Activated CD4-positive, alpha-beta memory T cell treated with anti-CD3 and anti-CD28 coated beads for 36 hours (primary cell): ENCODE measurements at regions of chr12 and their contacts with region 1.

Region 1: DNA sequence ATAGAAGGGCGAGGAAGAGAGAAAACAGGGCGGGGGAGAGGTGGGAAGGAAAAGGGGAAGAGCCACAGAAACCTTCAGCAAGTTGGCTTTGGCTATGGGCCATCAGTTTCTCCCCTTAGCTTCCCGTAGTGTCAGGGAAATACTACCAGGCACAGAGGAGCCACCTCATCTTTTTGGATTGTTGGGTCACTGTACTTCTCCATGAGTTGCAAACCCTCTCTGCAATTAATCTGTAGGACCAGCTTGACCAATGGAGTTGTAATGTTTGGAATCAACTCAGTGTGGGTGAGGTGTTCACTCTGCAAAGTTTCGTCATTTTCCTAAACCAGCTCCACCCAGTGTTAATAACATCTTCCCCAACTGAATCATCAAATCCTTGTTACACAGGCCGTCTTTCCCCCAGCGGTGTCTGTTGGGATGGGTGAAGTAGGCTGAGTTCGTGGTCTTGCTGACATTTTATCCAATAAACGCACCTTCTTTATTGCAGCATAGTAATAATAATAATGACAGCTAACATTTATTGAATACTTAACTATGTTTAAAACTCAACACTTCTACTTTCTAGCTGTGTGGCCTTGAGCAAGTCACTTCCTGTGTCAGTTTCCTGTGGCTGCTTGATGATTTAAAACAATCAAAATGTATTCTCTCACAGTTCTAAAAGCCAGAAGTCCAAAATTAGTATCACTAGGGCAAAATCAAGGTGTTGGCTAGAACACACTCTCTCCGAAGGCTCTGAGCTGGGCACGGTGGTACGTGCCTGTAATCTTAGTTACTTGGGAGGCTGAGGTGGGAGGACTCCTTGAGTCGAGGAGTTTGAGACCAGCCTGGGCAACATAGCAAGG is 8.1 kb upstream of the GLTP start:
- DNase-seq: peak; percentile 66
- H3K4me3 Mint-ChIP-seq: peak overlapping the region; percentile 27
- H3K27ac Mint-ChIP-seq: peak overlapping the region; percentile 94
- H3K4me1 Mint-ChIP-seq: peaks cover 38% of the 10 kb centered on the region
- H3K27me3 Mint-ChIP-seq: no peaks in the 10 kb centered on the region

Region 2: DNA sequence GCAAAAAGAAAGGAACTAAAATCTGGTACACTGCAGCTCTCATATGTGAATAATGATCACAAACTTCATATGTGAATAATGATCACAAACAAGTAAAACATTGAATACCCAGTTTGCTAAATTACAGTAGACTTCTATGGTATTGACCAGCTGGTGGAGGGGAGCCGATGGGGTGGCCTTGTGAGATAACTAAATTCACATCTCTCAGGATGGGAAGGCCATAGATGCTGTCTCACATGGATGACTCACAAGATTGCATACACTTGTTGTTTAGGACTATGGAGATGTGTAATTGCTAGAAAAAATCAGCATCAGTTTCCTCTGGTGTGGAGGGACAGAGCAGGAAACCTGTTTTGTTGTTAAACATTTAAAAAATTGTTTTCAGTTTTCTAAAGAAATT is 722.8 kb before region 1 on chr12:
- CTCF ChIA-PET with region 1: no interaction called
- POLR2A ChIA-PET with region 1: no interaction called
- intact Hi-C with region 1: no loop called
- DNase-seq: no peak
- H3K4me3 Mint-ChIP-seq: no peak overlapping the region
- H3K27ac Mint-ChIP-seq: no peak overlapping the region
- H3K4me1 Mint-ChIP-seq: no peaks in the 10 kb centered on the region
- H3K27me3 Mint-ChIP-seq: no peaks in the 10 kb centered on the region

Region 3: GRCh38 chr12:109833307-109834189 is 54.9 kb before region 1 on chr12 and contains the start of gene TRPV4:
- CTCF ChIA-PET with region 1: no interaction called
- POLR2A ChIA-PET with region 1: no interaction called
- intact Hi-C with region 1: no loop called
- DNase-seq: no peak
- H3K4me3 Mint-ChIP-seq: no peak within 1 kb of the TSS
- H3K27ac Mint-ChIP-seq: no peak within 1 kb of the TSS
- H3K4me1 Mint-ChIP-seq: peaks cover 4% of the 10 kb centered on the region
- H3K27me3 Mint-ChIP-seq: peaks cover 17% of the 10 kb centered on the region
- total RNA-seq, gene TRPV4: not detected

Region 4: GRCh38 chr12:109899783-109900751 is 11.7 kb after region 1 on chr12 and contains the start of gene TCHP:
- CTCF ChIA-PET with region 1: interaction called, 10 read pairs
- POLR2A ChIA-PET with region 1: interaction called, 14 read pairs
- intact Hi-C with region 1: loop called (anchors 1 kb)
- DNase-seq: peak; percentile 85
- H3K4me3 Mint-ChIP-seq: peak within 1 kb of the TSS; percentile 81
- H3K27ac Mint-ChIP-seq: peak within 1 kb of the TSS; percentile 86
- H3K4me1 Mint-ChIP-seq: peaks cover 22% of the 10 kb centered on the region
- H3K27me3 Mint-ChIP-seq: no peaks in the 10 kb centered on the region
- total RNA-seq, gene TCHP: 21.2 to 21.3 TPM